Mammary epithelial cell (primary cell): ENCODE measurements at regions of chr11 and their contacts with region 1.

Region 1: GRCh38 chr11:111631666-111632039 is 29.4 kb downstream of the SIK2 start:
- DNase-seq: peak; percentile 68
- H3K4me3 ChIP-seq: no peak overlapping the region
- H3K27ac ChIP-seq: peak overlapping the region; percentile 52
- H3K4me1 ChIP-seq: peaks cover 68% of the 10 kb centered on the region
- H3K27me3 ChIP-seq: no peaks in the 10 kb centered on the region
- CTCF ChIP-seq: no peak

Region 2: DNA sequence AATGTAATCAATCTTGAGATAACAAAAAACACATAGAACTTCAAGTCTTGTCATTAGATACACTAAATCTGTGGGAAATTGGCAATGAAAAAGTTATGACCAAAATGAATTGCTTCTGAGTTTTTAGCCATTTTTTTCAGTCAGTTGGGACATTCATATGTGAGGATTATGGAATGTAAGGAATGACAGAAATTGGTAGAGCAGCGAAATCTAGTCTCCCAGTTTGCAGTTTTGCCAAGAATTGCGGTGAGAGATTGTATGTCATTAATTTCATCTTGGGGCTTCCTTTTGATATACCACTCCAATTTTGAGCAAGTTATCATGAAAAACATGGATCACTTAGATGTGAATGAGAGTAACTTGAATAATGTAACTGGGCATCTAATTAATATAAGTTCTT is 20.5 kb after region 1 on chr11:
- CTCF ChIA-PET with region 1: no interaction called
- dilution Hi-C with region 1: no loop called
- in situ Hi-C with region 1: no loop called
- intact Hi-C with region 1: loop called (anchors 1 kb)
- DNase-seq: no peak
- H3K4me3 ChIP-seq: no peak overlapping the region
- H3K27ac ChIP-seq: peak overlapping the region; percentile 75
- H3K4me1 ChIP-seq: peaks cover 14% of the 10 kb centered on the region
- H3K27me3 ChIP-seq: no peaks in the 10 kb centered on the region
- CTCF ChIP-seq: no peak

Region 3: DNA sequence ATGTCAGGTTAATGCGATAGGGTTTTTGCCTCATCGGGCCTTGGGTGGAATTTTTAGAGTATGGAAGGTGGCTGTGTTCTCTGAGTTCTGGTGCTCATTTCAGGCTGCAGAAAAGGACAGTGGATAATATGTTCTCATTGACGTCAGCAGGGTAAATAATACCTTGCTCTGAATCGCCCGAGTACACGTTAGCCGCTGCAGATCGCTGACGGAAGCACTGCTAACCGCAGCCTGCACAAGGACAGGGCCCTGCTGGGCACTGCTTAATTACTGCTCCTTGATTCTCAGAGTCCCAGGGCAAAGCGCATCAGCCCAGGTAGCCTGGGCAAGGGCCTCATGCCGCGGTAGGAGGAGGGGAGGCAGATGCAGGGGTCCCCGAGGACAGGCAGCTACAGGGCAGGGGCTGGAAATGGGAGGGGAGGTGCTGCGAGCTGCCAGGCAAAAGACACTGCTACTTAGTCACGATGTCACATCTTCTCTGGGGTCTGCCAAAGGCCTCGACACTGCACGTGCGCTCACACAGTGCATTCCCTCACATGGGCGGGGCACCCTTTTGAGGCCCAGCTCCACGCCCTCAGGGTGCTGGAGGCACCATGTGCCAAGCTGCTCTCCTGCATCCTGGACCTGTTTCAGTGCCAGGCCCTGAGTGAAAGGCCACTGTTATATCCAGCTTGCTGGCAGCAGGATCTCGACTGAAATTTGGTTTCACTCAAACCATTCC is 99.4 kb after region 1 on chr11:
- CTCF ChIA-PET with region 1: no interaction called
- dilution Hi-C with region 1: no loop called
- in situ Hi-C with region 1: no loop called
- intact Hi-C with region 1: no loop called
- DNase-seq: peak; percentile 44
- H3K4me3 ChIP-seq: no peak overlapping the region
- H3K27ac ChIP-seq: no peak overlapping the region
- H3K4me1 ChIP-seq: peaks cover 19% of the 10 kb centered on the region
- H3K27me3 ChIP-seq: no peaks in the 10 kb centered on the region
- CTCF ChIP-seq: no peak

Region 4: GRCh38 chr11:111777094-111778046 is 145.7 kb after region 1 on chr11:
- CTCF ChIA-PET with region 1: no interaction called
- dilution Hi-C with region 1: no loop called
- in situ Hi-C with region 1: no loop called
- intact Hi-C with region 1: no loop called
- DNase-seq: peak; percentile 51
- H3K4me3 ChIP-seq: no peak overlapping the region
- H3K27ac ChIP-seq: no peak overlapping the region
- H3K4me1 ChIP-seq: no peaks in the 10 kb centered on the region
- H3K27me3 ChIP-seq: no peaks in the 10 kb centered on the region
- CTCF ChIP-seq: peak; percentile 68 to 78